ENCODE measurements at regions of chr12 and their contacts with region 1.

Region 1: DNA sequence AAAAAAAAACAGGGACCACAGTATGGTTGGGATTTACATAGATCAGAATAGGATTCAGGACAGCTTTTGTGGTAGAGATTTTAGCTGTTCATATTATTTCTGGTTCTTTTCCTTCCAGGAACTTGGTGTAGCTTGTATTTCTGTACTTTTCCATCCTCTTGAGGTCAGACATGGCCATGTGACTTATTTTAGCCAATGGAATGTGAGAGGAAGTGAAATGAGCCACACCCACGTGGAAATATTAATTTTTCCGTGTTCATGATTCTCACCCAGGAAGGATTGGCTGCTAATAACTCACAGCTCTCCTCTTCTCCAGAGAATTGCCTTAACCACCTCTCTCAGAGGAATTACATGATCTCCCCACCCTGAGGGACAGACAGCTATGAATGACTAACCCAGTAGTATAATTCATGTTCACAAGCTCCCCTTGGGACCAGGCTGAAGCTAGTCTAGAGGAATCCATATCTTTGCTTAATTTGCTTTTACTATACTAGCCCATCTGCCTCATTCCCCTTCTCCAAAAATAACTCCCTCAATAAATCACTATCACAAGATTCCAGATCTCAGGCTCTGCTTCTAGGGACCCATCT is 340.4 kb downstream of the NUAK1 start:
- DNase-seq: no peak
- ATAC-seq: peak in 1 of 4 donors; percentile 22
- H3K4me3 ChIP-seq: no peak overlapping the region
- H3K27ac ChIP-seq: peak overlapping the region in 6 of 12 donors; percentile 6 to 32 (median 10)
- H3K4me1 ChIP-seq: peaks cover 0 to 9% (median 2%) of the 10 kb centered on the region in 12 donors
- H3K27me3 ChIP-seq: no peaks in the 10 kb centered on the region
- CTCF ChIP-seq: no peak
- POLR2A ChIP-seq: no peak

Region 2: DNA sequence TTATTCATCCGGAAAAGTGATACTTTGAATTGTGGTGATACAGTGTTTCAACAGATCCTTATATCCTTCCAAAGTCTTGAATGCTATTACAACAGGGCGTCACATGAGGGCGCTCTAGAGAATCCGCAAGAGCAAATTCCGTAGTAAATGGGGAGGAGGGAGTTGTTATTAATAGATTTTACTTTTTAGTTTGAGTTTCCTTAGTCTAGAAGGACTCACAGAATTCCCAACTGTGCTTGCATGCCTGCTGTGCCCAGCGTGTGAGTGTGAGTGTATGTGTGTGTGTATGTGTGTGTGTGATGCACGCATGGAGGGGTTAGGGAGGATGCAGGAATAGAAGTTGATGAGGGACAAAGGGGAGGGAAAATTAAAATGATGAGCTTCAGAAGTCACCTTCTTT is 92.6 kb before region 1 on chr12:
- intact Hi-C with region 1: no loop called
- DNase-seq: peak in 4 of 5 donors; percentile 32 to 58 (median 46)
- ATAC-seq: peak; percentile 17 to 72 (median 60)
- H3K4me3 ChIP-seq: no peak overlapping the region
- H3K27ac ChIP-seq: peak overlapping the region in 9 of 12 donors; percentile 24 to 61 (median 55)
- H3K4me1 ChIP-seq: peaks cover 0 to 19% (median 11%) of the 10 kb centered on the region in 12 donors
- H3K27me3 ChIP-seq: no peaks in the 10 kb centered on the region
- CTCF ChIP-seq: peak; percentile 72 to 92 (median 86)
- POLR2A ChIP-seq: no peak

Region 3: DNA sequence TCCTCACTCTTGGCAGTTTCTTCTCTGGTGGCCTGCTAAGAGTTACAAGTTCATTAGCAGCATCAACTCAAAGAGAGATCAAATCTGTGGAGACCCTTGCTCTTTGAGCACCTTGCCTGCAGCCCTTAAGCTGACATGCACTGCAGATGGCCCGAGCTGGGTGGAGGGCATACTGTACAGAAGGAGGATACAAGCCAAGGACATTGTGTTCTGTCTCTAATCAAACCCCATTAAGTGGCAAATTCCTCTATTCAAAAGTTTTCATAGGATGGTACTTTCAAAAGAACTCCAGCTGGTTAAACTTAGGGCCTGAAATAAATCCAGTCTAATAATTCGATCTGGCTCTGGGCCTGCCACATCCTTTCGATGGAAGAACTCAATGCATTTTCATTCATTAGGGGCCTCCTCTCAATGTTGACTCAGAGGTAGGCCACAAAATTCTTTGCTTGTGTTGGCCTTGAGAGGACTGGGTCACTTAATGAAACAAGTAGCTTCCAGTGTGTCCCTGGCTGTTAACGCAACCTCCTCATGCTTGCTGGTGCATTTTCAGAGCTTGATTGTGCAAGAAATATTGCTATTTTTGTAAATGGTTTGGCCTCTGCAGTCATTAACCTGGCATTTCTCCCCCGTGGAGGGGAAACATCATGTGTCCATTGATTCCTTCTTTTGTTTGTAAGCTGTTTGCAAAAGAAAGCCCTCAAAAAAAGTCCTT is 22.2 kb after region 1 on chr12:
- intact Hi-C with region 1: loop called in 1 of 10 experiments (anchors 2 kb)
- DNase-seq: peak in 3 of 5 donors; percentile 15 to 51 (median 49)
- ATAC-seq: peak; percentile 81 to 89 (median 86)
- H3K4me3 ChIP-seq: no peak overlapping the region
- H3K27ac ChIP-seq: peak overlapping the region; percentile 2 to 65 (median 36)
- H3K4me1 ChIP-seq: peaks cover 0 to 37% (median 26%) of the 10 kb centered on the region in 12 donors
- H3K27me3 ChIP-seq: no peaks in the 10 kb centered on the region
- CTCF ChIP-seq: no peak
- POLR2A ChIP-seq: no peak

Region 4: GRCh38 chr12:105831372-105831771 is 33.0 kb after region 1 on chr12:
- intact Hi-C with region 1: loop called in 1 of 10 experiments (anchors 5 kb)
- DNase-seq: no peak
- ATAC-seq: no peak
- H3K4me3 ChIP-seq: no peak overlapping the region
- H3K27ac ChIP-seq: no peak overlapping the region
- H3K4me1 ChIP-seq: peaks cover 0 to 6% (median 0%) of the 10 kb centered on the region in 12 donors
- H3K27me3 ChIP-seq: no peaks in the 10 kb centered on the region
- CTCF ChIP-seq: no peak
- POLR2A ChIP-seq: no peak

Region 5: GRCh38 chr12:105860565-105861207 is 62.3 kb after region 1 on chr12:
- intact Hi-C with region 1: no loop called
- DNase-seq: no peak
- ATAC-seq: no peak
- H3K4me3 ChIP-seq: no peak overlapping the region
- H3K27ac ChIP-seq: no peak overlapping the region
- H3K4me1 ChIP-seq: peaks cover 0 to 2% (median 0%) of the 10 kb centered on the region in 12 donors
- H3K27me3 ChIP-seq: no peaks in the 10 kb centered on the region
- CTCF ChIP-seq: no peak
- POLR2A ChIP-seq: no peak